Ascending aorta (tissue), 2 donors: ENCODE measurements at regions of chr4 and their contacts with region 1.

Region 1: DNA sequence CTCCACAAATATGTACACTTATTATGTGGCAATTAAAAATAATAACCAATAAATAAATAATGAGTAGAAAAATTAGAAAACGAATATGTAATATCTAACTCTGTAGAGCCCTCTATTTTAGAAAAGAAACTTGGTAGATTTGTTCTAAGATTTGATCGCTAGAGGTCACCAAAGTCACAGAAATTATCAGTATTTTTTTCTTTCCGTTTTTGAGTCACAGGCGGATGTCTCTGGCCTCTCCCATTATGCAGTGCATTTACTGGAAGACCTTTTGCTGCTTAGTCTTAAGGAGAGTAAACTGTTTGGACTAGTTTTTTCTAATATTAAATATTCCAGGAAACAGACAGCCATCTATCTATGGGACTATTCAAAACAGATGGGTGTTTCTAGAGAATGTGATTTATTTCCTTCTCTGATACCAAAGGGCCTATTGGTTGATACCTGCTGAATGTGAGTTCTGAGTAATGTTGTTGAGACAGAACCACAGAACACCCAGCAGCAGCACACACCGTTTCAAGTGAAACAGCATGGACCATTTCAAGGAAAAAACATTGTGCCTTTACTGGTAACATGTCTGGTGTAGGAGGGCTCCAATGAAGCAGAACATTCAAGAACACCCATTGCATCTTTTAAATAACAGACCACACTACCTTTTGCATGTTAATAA is 34.0 kb upstream of the GYPA start:
- DNase-seq: no peak
- H3K4me3 ChIP-seq: no peak overlapping the region
- H3K27ac ChIP-seq: no peak overlapping the region
- H3K4me1 ChIP-seq: no peaks in the 10 kb centered on the region
- H3K27me3 ChIP-seq: no peaks in the 10 kb centered on the region
- CTCF ChIP-seq: peak; percentile 15 to 44 (median 19)

Region 2: DNA sequence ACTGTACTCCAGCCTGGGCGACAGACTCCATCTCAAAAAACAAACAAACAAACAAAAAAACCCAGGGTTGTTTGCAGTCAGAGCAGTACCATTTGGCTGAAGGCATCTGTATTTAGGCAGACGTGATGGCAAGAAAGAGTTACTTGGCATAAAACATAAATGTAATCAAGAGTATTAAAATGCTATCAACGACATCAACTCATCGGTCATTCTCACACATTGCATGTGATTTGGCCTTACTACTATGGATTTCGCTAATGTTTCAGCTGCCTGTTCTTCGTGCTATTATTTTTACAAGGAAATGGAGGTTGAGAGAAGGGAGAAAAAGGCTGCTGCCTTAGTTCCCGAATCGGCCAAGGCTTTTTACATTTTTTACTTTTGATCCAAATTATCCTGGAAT is 676.5 kb before region 1 on chr4:
- intact Hi-C with region 1: no loop called
- DNase-seq: no peak
- H3K4me3 ChIP-seq: no peak overlapping the region
- H3K27ac ChIP-seq: no peak overlapping the region
- H3K4me1 ChIP-seq: no peaks in the 10 kb centered on the region
- H3K27me3 ChIP-seq: no peaks in the 10 kb centered on the region
- CTCF ChIP-seq: no peak

Region 3: DNA sequence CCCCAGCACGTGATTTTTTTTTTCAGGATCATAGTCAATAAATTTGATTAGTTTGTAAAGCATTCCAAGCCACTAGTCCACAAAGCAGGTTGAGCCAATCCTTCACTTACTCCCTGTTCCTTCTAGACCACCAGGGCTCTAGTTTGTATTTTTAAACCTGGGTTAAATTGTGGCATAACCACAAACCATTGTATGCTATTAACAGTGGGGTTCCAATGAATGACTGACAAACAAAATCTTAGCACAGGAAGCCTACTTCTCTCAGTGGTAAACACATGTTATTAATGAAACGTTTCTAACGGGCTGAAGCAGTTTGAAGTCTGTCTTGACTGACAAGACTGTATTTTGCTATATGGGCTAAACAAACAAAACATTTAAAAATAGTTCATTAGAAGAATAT is 14.6 kb after region 1 on chr4:
- intact Hi-C with region 1: no loop called
- DNase-seq: no peak
- H3K4me3 ChIP-seq: no peak overlapping the region
- H3K27ac ChIP-seq: no peak overlapping the region
- H3K4me1 ChIP-seq: no peaks in the 10 kb centered on the region
- H3K27me3 ChIP-seq: no peaks in the 10 kb centered on the region
- CTCF ChIP-seq: no peak

Region 4: DNA sequence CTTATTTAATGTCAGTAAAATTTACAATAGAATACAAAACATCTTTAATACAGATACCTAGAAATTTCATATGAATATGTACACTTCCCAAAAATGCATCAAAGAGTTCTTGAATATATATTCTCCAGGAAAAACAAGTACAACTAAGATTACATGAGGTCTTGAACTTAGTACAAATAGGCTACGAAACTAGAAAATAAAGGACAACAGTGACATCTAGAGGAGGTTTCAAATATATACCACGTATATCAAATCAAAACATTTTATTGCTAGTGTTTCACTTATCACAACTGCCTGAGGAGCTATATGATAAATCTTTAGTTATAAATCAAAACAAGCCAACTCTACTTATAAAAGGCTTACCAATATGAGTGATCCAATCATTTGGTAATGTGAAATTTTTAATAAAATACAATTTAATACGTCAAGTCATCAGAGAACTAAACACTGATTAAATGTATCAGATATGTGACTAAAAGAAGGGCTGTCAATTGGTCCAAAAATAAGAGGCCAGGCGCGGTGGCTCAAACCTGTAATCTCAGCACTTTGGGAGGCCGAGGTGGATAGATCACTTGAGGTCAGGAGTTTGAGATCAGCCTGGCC is 886.9 kb after region 1 on chr4:
- intact Hi-C with region 1: loop called (anchors 2 kb)
- DNase-seq: no peak
- H3K4me3 ChIP-seq: no peak overlapping the region
- H3K27ac ChIP-seq: no peak overlapping the region
- H3K4me1 ChIP-seq: no peaks in the 10 kb centered on the region
- H3K27me3 ChIP-seq: no peaks in the 10 kb centered on the region
- CTCF ChIP-seq: peak; percentile 12 to 59 (median 46)